PC-9 (cell line): ENCODE measurements at regions of chr7 and their contacts with region 1.

Region 1: GRCh38 chr7:55018361-55019190 is at the start of gene EGFR:
- DNase-seq: peak; percentile 80 to 96
- H3K4me3 ChIP-seq: peak within 1 kb of the TSS; percentile 79
- H3K27ac ChIP-seq: peak within 1 kb of the TSS; percentile 68
- H3K4me1 ChIP-seq: peaks cover 37% of the 10 kb centered on the region
- H3K27me3 ChIP-seq: no peaks in the 10 kb centered on the region
- CTCF ChIP-seq: no peak
- total RNA-seq, gene EGFR: 324 and 342 TPM in 2 replicates

Region 2: GRCh38 chr7:54015251-54015650 is 1003.3 kb before region 1 on chr7:
- CTCF ChIA-PET with region 1: no interaction called
- POLR2A ChIA-PET with region 1: no interaction called
- intact Hi-C with region 1: no loop called
- DNase-seq: peak in 1 of 2 experiments; percentile 50
- H3K4me3 ChIP-seq: no peak overlapping the region
- H3K27ac ChIP-seq: no peak overlapping the region
- H3K4me1 ChIP-seq: no peaks in the 10 kb centered on the region
- H3K27me3 ChIP-seq: no peaks in the 10 kb centered on the region
- CTCF ChIP-seq: no peak

Region 3: GRCh38 chr7:54299426-54299825 is 719.1 kb before region 1 on chr7:
- CTCF ChIA-PET with region 1: no interaction called
- POLR2A ChIA-PET with region 1: no interaction called
- intact Hi-C with region 1: no loop called
- DNase-seq: no peak
- H3K4me3 ChIP-seq: no peak overlapping the region
- H3K27ac ChIP-seq: no peak overlapping the region
- H3K4me1 ChIP-seq: no peaks in the 10 kb centered on the region
- H3K27me3 ChIP-seq: peaks cover 8% of the 10 kb centered on the region; the same call in 1 of the 2 replicates
- CTCF ChIP-seq: no peak

Region 4: DNA sequence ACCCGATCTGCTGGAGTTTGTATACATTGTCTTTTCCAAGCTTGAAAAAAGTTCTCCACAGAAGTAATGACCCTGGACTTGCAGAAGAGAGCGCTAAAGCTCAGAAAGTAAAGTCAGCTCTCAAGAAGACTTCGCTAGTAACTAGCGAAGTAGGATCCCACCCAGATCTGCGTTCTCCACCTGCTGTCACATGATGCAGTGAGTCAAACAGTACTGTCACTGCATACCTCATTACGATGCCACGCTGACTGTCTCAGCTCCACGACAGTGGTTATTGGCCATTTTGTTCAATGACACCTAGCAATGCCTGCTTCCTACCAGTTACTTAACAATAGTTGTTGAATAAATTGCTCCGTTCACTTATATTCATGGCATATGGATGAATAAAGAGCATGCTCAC is 229.9 kb before region 1 on chr7:
- CTCF ChIA-PET with region 1: no interaction called
- POLR2A ChIA-PET with region 1: interaction called, 3 read pairs
- intact Hi-C with region 1: loop called (anchors 1 kb)
- DNase-seq: peak; percentile 79 to 99
- H3K4me3 ChIP-seq: no peak overlapping the region
- H3K27ac ChIP-seq: peak overlapping the region; percentile 27
- H3K4me1 ChIP-seq: peaks cover 29% of the 10 kb centered on the region
- H3K27me3 ChIP-seq: no peaks in the 10 kb centered on the region
- CTCF ChIP-seq: peak; percentile 95

Region 5: GRCh38 chr7:54877683-54878082 is 140.9 kb before region 1 on chr7:
- CTCF ChIA-PET with region 1: interaction called, 5 read pairs
- POLR2A ChIA-PET with region 1: interaction called, 11 read pairs
- intact Hi-C with region 1: loop called (anchors 1 kb)
- DNase-seq: peak; percentile 35 to 73
- H3K4me3 ChIP-seq: no peak overlapping the region
- H3K27ac ChIP-seq: no peak overlapping the region
- H3K4me1 ChIP-seq: peaks cover 8% of the 10 kb centered on the region
- H3K27me3 ChIP-seq: no peaks in the 10 kb centered on the region
- CTCF ChIP-seq: peak; percentile 67

Region 6: DNA sequence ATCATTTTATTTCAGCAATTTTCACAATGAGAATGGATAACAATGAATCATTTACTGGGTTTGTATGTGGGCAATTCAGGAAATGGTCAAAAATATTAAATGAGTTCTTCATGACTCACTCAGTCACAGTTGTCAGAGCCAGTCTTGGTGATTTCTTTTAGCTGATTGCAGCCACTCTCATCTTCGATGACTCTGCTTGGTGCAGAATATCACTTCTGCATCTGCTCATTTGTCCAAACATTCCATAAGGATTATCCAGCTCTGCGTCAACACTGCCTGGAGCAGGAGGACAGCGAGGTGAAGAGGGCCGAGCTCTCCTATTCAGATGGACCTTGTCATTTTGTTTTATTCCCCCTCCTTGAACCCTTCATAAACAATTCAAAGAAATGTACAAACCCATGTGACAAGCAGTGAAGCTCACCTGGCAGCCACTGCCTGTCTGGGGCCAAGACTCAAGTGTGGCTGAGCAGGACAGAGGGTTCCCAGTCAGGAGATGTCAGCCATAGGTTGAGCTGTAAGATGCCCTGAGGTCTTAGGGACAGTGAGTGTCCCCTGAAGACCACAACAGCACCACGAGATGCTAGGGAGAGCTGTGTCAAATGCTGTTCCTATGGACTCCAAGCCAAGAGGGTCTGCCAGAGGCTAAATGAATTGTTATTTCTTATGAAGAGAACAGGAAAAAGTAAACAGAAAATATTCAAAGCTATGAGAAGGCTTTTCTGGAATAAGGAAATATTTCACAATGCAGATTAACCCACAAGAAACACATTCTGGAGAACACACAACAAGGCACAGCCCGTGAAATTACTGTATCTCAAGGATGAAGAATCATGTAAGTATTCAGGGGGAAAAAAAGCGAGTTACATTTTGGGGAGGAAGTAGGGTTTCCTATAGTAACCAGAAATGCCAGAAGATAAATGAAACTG is 32.9 kb before region 1 on chr7:
- CTCF ChIA-PET with region 1: interaction called, 5 read pairs
- POLR2A ChIA-PET with region 1: interaction called, 9 read pairs
- intact Hi-C with region 1: loop called (anchors 1 kb)
- DNase-seq: peak; percentile 75 to 100
- H3K4me3 ChIP-seq: peak overlapping the region; percentile 38; the same call in 1 of the 2 replicates
- H3K27ac ChIP-seq: peak overlapping the region; percentile 89
- H3K4me1 ChIP-seq: peaks cover 51% of the 10 kb centered on the region
- H3K27me3 ChIP-seq: no peaks in the 10 kb centered on the region
- CTCF ChIP-seq: no peak

Region 7: GRCh38 chr7:55053651-55054571 is 35.3 kb after region 1 on chr7:
- CTCF ChIA-PET with region 1: interaction called, 4 read pairs
- POLR2A ChIA-PET with region 1: interaction called, 10 read pairs
- intact Hi-C with region 1: loop called (anchors 1 kb)
- DNase-seq: peak; percentile 90 to 98
- H3K4me3 ChIP-seq: peak overlapping the region; percentile 2; the same call in 1 of the 2 replicates
- H3K27ac ChIP-seq: peak overlapping the region; percentile 82
- H3K4me1 ChIP-seq: peaks cover 72% of the 10 kb centered on the region
- H3K27me3 ChIP-seq: no peaks in the 10 kb centered on the region
- CTCF ChIP-seq: no peak

Region 8: GRCh38 chr7:55255496-55256435 is 237.2 kb after region 1 on chr7:
- CTCF ChIA-PET with region 1: interaction called, 3 read pairs
- POLR2A ChIA-PET with region 1: interaction called, 4 read pairs
- intact Hi-C with region 1: loop called (anchors 2 kb)
- DNase-seq: peak; percentile 81 to 96
- H3K4me3 ChIP-seq: peak overlapping the region; percentile 64
- H3K27ac ChIP-seq: no peak overlapping the region
- H3K4me1 ChIP-seq: peaks cover 5% of the 10 kb centered on the region
- H3K27me3 ChIP-seq: no peaks in the 10 kb centered on the region
- CTCF ChIP-seq: peak; percentile 99